PC-9 (cell line): ENCODE measurements at regions of chr2 and their contacts with region 1.

Region 1: GRCh38 chr2:149597668-149598326 is 10.2 kb upstream of the MMADHC start:
- DNase-seq: peak; percentile 50 to 65
- H3K4me3 ChIP-seq: no peak overlapping the region
- H3K27ac ChIP-seq: no peak overlapping the region
- H3K4me1 ChIP-seq: peaks cover 6% of the 10 kb centered on the region; the same call in 1 of the 2 replicates
- H3K27me3 ChIP-seq: no peaks in the 10 kb centered on the region
- CTCF ChIP-seq: peak; percentile 70

Region 2: GRCh38 chr2:149538138-149538833 is 59.5 kb before region 1 on chr2:
- CTCF ChIA-PET with region 1: no interaction called
- POLR2A ChIA-PET with region 1: no interaction called
- intact Hi-C with region 1: no loop called
- DNase-seq: peak; percentile 57 to 85
- H3K4me3 ChIP-seq: no peak overlapping the region
- H3K27ac ChIP-seq: no peak overlapping the region
- H3K4me1 ChIP-seq: peaks cover 13% of the 10 kb centered on the region; the same call in 1 of the 2 replicates
- H3K27me3 ChIP-seq: no peaks in the 10 kb centered on the region
- CTCF ChIP-seq: no peak

Region 3: DNA sequence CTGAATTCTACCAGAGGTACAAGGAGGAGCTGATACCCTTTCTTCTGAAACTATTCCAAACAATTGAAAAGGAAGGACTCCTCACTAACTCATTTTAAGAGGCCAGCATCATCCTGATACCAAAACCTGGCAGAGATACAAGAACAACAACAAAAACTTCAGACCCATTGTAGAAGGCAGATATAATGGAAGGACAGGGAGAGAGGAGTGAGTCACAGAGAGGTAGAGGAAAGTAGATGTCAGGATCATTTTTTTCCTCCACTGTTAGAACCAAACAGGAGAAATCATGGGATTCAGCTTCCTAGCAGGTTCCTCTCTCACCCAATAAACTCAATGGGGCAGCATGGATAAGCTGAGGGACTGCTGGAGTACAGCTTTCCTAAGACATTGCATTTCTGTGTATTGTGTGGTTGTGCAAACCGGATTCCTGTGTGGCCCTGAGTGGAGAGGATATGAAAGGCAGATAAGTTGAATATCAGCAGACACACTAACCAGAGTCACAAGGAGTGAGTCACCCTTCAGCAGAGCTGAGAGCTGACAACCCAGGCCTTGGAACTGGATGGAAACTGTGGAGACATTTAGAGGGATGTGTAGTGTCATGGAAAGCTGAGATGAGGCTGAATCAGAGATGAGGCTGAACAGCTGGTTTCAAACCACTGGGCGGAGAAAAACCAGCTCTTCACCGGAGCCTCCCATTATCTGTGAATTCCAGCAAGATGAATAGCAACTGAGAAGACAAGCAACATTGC is 50.7 kb after region 1 on chr2:
- CTCF ChIA-PET with region 1: interaction called, 25 read pairs
- POLR2A ChIA-PET with region 1: no interaction called
- intact Hi-C with region 1: no loop called
- DNase-seq: peak; percentile 43 to 52
- H3K4me3 ChIP-seq: no peak overlapping the region
- H3K27ac ChIP-seq: no peak overlapping the region
- H3K4me1 ChIP-seq: no peaks in the 10 kb centered on the region; the same call in 1 of the 2 replicates
- H3K27me3 ChIP-seq: no peaks in the 10 kb centered on the region
- CTCF ChIP-seq: no peak

Region 4: DNA sequence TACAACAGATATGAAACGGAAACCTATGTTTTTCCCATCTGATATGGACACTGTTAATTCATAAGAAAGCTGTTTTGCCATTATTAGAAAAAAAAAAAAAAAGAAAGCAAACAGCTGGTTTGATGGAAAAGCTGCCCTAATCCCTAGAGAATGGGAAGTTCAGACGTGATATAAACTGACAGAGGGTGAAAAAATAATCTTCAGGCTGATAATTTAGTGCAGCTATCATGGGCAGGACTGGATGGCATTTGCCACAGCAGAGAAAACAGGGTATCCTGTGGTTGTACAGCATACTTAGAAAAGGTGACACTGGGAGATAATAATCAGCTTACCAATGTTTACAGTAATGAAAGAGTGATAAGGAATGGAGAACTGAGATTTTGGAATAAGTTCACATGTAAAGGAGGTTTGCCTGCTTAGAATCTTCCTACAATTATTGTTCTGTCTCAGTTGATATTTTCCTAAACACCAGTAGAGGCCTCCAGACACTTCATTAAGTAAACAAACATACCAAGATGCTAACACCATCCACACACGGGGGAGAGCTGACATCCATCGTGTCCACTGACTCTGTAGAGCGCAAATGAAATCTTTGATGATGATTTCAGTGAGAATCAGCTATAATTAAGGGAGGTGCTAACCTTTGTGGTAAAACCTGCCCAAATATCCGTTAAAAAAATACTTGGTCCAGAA is 201.4 kb after region 1 on chr2:
- CTCF ChIA-PET with region 1: interaction called, 3 read pairs
- POLR2A ChIA-PET with region 1: no interaction called
- intact Hi-C with region 1: loop called (anchors 2 kb)
- DNase-seq: peak in 1 of 2 experiments; percentile 4
- H3K4me3 ChIP-seq: no peak overlapping the region
- H3K27ac ChIP-seq: no peak overlapping the region
- H3K4me1 ChIP-seq: no peaks in the 10 kb centered on the region
- H3K27me3 ChIP-seq: no peaks in the 10 kb centered on the region
- CTCF ChIP-seq: peak; percentile 37; the same call in 1 of the 2 replicates

Region 5: GRCh38 chr2:150167711-150168110 is 569.9 kb after region 1 on chr2:
- CTCF ChIA-PET with region 1: no interaction called
- POLR2A ChIA-PET with region 1: no interaction called
- intact Hi-C with region 1: loop called (anchors 1 kb)
- DNase-seq: peak; percentile 42 to 86
- H3K4me3 ChIP-seq: no peak overlapping the region
- H3K27ac ChIP-seq: peak overlapping the region; percentile 98
- H3K4me1 ChIP-seq: peaks cover 48% of the 10 kb centered on the region
- H3K27me3 ChIP-seq: no peaks in the 10 kb centered on the region
- CTCF ChIP-seq: no peak

Region 6: DNA sequence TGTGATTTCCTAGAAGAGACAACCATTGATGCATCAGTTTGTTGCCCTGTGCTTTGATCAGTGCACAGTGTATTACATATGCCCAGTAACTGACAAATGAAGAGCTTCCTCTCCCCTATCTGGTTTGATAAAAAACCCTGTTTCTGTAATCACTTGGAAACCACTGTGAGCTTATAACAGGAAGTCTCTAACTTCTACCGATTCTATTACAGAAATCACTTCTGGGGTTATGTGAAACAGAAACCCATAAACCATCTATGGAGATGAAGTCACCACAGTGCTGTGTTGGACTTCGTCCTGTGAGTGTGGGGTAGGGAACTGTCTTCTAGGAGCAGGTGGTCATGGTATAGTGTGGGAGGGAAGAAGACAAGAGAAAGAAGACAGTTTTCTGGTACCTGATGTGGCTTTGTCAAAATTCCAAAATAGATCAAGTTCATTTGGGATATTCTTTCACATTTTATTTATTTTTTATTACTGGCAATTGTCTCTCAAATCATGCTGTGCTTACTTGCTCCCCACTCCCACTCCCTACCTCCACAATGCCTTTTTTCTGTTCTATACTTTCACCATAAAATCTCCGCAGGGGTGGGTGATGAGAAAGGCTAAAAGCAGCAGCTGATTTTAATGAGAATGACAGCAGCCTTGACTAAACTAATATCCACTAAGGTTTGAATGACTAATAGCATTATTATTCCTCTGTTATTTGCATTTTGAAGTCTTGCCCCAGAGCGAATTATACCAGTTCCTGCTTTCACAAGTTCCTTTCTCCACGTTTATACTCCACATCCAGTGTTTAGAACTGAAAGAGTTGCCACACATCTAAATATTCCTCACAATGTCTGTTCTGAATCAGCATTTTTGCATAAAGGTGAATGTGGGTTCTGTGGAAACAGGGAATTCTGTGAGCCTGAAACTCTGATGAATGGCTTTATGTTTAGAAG is 931.3 kb after region 1 on chr2:
- CTCF ChIA-PET with region 1: no interaction called
- POLR2A ChIA-PET with region 1: no interaction called
- intact Hi-C with region 1: loop called (anchors 5 kb)
- DNase-seq: peak in 1 of 2 experiments; percentile 91
- H3K4me3 ChIP-seq: peak overlapping the region; percentile 33; the same call in 1 of the 2 replicates
- H3K27ac ChIP-seq: peak overlapping the region; percentile 95
- H3K4me1 ChIP-seq: peaks cover 51% of the 10 kb centered on the region
- H3K27me3 ChIP-seq: no peaks in the 10 kb centered on the region
- CTCF ChIP-seq: no peak

Region 7: GRCh38 chr2:150911766-150912280 is 1314.0 kb after region 1 on chr2:
- CTCF ChIA-PET with region 1: no interaction called
- POLR2A ChIA-PET with region 1: no interaction called
- intact Hi-C with region 1: loop called (anchors 1 kb)
- DNase-seq: peak; percentile 48 to 65
- H3K4me3 ChIP-seq: no peak overlapping the region
- H3K27ac ChIP-seq: peak overlapping the region; percentile 55
- H3K4me1 ChIP-seq: no peaks in the 10 kb centered on the region
- H3K27me3 ChIP-seq: no peaks in the 10 kb centered on the region
- CTCF ChIP-seq: 0 out of 2 replicates have a peak, but pooled peaks have one; percentile 18

Region 8: GRCh38 chr2:151161821-151162551 is 1564.2 kb after region 1 on chr2:
- CTCF ChIA-PET with region 1: interaction called, 3 read pairs
- POLR2A ChIA-PET with region 1: no interaction called
- intact Hi-C with region 1: loop called (anchors 5 kb)
- DNase-seq: no peak
- H3K4me3 ChIP-seq: no peak overlapping the region
- H3K27ac ChIP-seq: no peak overlapping the region
- H3K4me1 ChIP-seq: no peaks in the 10 kb centered on the region
- H3K27me3 ChIP-seq: no peaks in the 10 kb centered on the region
- CTCF ChIP-seq: peak; percentile 32; the same call in 1 of the 2 replicates